Esophagus muscularis mucosa (tissue), 4 donors: ENCODE measurements at regions of chr1 and their contacts with region 1.

Region 1: GRCh38 chr1:2240270-2241156 is 12.4 kb downstream of the SKI start:
- DNase-seq: no peak
- H3K4me3 ChIP-seq: peak overlapping the region; percentile 17 to 43 (median 34)
- H3K27ac ChIP-seq: peak overlapping the region; percentile 80 to 93 (median 90)
- H3K4me1 ChIP-seq: peaks cover 92 to 95% (median 93%) of the 10 kb centered on the region in 4 donors
- H3K27me3 ChIP-seq: no peaks in the 10 kb centered on the region
- CTCF ChIP-seq: no peak
- EP300 ChIP-seq: no peak
- POLR2A ChIP-seq: no peak

Region 2: GRCh38 chr1:2194898-2195673 is 45.4 kb before region 1 on chr1:
- intact Hi-C with region 1: no loop called
- DNase-seq: peak; percentile 98
- H3K4me3 ChIP-seq: peak overlapping the region; percentile 67 to 84 (median 76)
- H3K27ac ChIP-seq: peak overlapping the region; percentile 94 to 99 (median 98)
- H3K4me1 ChIP-seq: peaks cover 61 to 78% (median 72%) of the 10 kb centered on the region in 4 donors
- H3K27me3 ChIP-seq: no peaks in the 10 kb centered on the region
- CTCF ChIP-seq: peak; percentile 93 to 99 (median 97)
- EP300 ChIP-seq: no peak
- POLR2A ChIP-seq: no peak

Region 3: GRCh38 chr1:2205191-2205952 is 35.1 kb before region 1 on chr1:
- intact Hi-C with region 1: no loop called
- DNase-seq: peak; percentile 100
- H3K4me3 ChIP-seq: peak overlapping the region; percentile 56 to 68 (median 61)
- H3K27ac ChIP-seq: peak overlapping the region; percentile 83 to 95 (median 90)
- H3K4me1 ChIP-seq: peaks cover 54 to 81% (median 80%) of the 10 kb centered on the region in 4 donors
- H3K27me3 ChIP-seq: no peaks in the 10 kb centered on the region
- CTCF ChIP-seq: peak in 1 of 3 experiments; percentile 34
- EP300 ChIP-seq: no peak
- POLR2A ChIP-seq: no peak

Region 4: DNA sequence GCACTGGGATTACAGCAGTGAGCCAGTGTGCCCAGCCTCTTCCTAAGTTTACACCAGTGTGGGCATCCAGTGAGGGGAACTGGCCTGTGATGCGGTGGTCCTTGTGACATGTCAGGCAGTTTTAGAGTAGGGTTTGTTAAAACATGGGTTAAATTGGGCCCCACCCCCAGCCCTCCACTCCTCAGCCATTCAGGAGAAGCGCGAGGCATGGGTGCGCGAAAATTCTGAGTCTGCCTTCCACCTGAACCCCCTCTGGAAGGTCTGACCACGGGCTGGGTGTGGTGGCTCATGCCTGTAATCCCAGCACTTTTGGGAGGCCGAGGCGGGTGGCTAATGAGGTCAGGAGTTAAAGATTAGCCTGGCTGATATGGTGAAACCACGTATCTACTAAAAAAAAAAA is 39.3 kb after region 1 on chr1:
- intact Hi-C with region 1: loop called (anchors 2 kb)
- DNase-seq: no peak
- H3K4me3 ChIP-seq: no peak overlapping the region
- H3K27ac ChIP-seq: peak overlapping the region; percentile 76 to 84 (median 81)
- H3K4me1 ChIP-seq: peaks cover 73 to 81% (median 80%) of the 10 kb centered on the region in 4 donors
- H3K27me3 ChIP-seq: no peaks in the 10 kb centered on the region
- CTCF ChIP-seq: no peak
- EP300 ChIP-seq: no peak
- POLR2A ChIP-seq: no peak

Region 5: GRCh38 chr1:2290595-2291510 is 50.3 kb after region 1 on chr1:
- intact Hi-C with region 1: loop called (anchors 5 kb)
- DNase-seq: peak; percentile 98
- H3K4me3 ChIP-seq: peak overlapping the region; percentile 30 to 55 (median 42)
- H3K27ac ChIP-seq: peak overlapping the region; percentile 70 to 88 (median 79)
- H3K4me1 ChIP-seq: peaks cover 86 to 100% (median 99%) of the 10 kb centered on the region in 4 donors
- H3K27me3 ChIP-seq: no peaks in the 10 kb centered on the region
- CTCF ChIP-seq: no peak
- EP300 ChIP-seq: no peak
- POLR2A ChIP-seq: no peak